Activated T-helper 1 cell treated with anti-CD3 and anti-CD28 coated beads, Interleukin-12 subunit alpha, Interleukin-12 subunit beta, Interleukin-2, Interleukin-4 antibody, amounts not matched to agents 30 ng/mL and 10 ng/mL and 1 ng/mL, durations not matched to agents 14 hours and 24 hours and 36 hours (primary cell): ENCODE measurements at regions of chr11 and their contacts with region 1.

Region 1: GRCh38 chr11:47667135-47667534 is 24.8 kb upstream of the MTCH2 start:
- DNase-seq: no peak
- H3K4me3 Mint-ChIP-seq: no peak overlapping the region
- H3K27ac Mint-ChIP-seq: no peak overlapping the region
- H3K4me1 Mint-ChIP-seq: peaks cover 6% of the 10 kb centered on the region
- H3K27me3 Mint-ChIP-seq: no peaks in the 10 kb centered on the region

Region 2: GRCh38 chr11:47593934-47594855 is 72.9 kb before region 1 on chr11 and contains the start of gene C1QTNF4:
- intact Hi-C with region 1: no loop called
- DNase-seq: no peak
- H3K4me3 Mint-ChIP-seq: no peak within 1 kb of the TSS
- H3K27ac Mint-ChIP-seq: no peak within 1 kb of the TSS
- H3K4me1 Mint-ChIP-seq: peaks cover 6% of the 10 kb centered on the region
- H3K27me3 Mint-ChIP-seq: peaks cover 28% of the 10 kb centered on the region
- total RNA-seq, gene C1QTNF4: 0.16 TPM in 1 of 2 replicates, not detected in the other

Region 3: GRCh38 chr11:47715082-47715669 is 48.0 kb after region 1 on chr11 and contains the start of gene AGBL2:
- intact Hi-C with region 1: loop called (anchors 1 kb)
- DNase-seq: peak; percentile 84
- H3K4me3 Mint-ChIP-seq: peak within 1 kb of the TSS; percentile 93
- H3K27ac Mint-ChIP-seq: peak within 1 kb of the TSS; percentile 96
- H3K4me1 Mint-ChIP-seq: peaks cover 31% of the 10 kb centered on the region
- H3K27me3 Mint-ChIP-seq: no peaks in the 10 kb centered on the region
- total RNA-seq, gene AGBL2: 3.2 and 5.5 TPM in 2 replicates